ENCODE measurements at regions of chr4 and their contacts with region 1.

Region 1: DNA sequence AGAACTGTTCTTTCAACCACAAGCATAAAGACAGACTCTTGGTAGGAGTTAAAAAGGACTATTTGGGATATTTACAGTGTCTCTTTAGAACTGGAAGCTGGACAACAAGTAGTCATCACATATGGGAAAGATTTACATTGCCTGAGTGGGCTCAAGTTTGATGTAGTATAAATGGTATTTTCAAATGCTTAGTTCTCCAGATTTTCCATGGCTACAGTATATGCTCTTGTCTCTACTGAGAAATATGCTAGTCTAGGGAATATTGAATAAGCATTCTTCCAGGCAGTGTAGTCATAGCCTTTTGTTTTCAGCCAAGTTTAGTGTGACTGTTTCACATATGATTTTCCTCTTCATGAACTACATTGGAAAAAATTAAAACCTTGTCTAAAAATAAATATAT is 315.6 kb downstream of the ARHGAP24 start:
- DNase-seq: no peak
- H3K27ac ChIP-seq: no peak overlapping the region
- CTCF ChIP-seq: no peak

Region 2: GRCh38 chr4:85964298-85964697 is 173.7 kb after region 1 on chr4:
- CTCF ChIA-PET with region 1: interaction called, 10 read pairs
- POLR2A ChIA-PET with region 1: no interaction called
- DNase-seq: no peak
- H3K27ac ChIP-seq: no peak overlapping the region
- CTCF ChIP-seq: no peak